Breast epithelium (tissue), 4 donors: ENCODE measurements at regions of chr14 and their contacts with region 1.

Region 1: DNA sequence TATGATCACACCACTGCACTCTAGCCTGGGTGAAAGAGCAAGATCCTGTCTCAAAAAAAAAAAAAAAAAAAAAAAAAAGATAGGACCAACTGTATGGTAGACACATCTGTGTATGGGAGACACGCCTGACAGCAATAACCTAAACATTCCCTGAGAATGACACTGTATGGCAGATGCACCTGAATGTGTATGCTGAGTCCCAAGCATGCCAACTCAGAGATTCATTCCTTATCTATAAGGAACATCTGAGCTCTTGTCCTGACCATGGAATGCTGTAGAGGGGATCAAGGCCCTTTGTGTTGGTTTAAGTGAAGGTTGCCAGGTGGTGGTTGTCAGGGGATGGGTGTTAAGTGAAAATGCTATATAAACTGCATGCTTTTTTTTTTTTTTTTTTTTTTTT is 19.2 kb upstream of the LGALS3 start:
- DNase-seq: no peak
- H3K4me3 ChIP-seq: no peak overlapping the region
- H3K27ac ChIP-seq: no peak overlapping the region
- H3K4me1 ChIP-seq: peaks cover 8 to 16% of the 10 kb centered on the region in 2 donors
- H3K27me3 ChIP-seq: no peaks in the 10 kb centered on the region
- CTCF ChIP-seq: no peak
- POLR2A ChIP-seq: no peak

Region 2: DNA sequence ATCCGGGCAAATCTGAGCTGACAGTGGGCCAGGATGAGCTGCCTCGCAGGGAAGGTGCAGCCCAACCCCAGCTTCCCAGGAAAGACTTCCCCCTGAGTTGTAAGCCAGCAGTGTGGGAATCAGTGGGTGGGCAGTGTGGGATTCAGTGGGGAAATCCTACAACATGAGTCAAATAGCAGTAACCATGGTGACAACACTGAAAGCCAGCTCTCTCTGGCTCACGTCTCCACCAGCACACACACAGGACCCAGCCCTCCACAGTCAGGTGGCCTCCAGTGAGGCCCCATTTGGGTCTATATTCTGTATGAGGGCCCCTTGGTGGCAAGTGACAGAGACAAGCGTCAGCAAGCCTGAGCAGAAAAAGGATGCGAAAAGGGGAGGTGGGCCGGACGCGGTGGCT is 13.3 kb after region 1 on chr14:
- intact Hi-C with region 1: loop called (anchors 1 kb)
- DNase-seq: no peak
- H3K4me3 ChIP-seq: no peak overlapping the region
- H3K27ac ChIP-seq: peak overlapping the region; percentile 71 to 79
- H3K4me1 ChIP-seq: peaks cover 9 to 17% of the 10 kb centered on the region in 2 donors
- H3K27me3 ChIP-seq: no peaks in the 10 kb centered on the region
- CTCF ChIP-seq: no peak
- POLR2A ChIP-seq: no peak

Region 3: GRCh38 chr14:55789430-55789829 is 679.6 kb after region 1 on chr14:
- intact Hi-C with region 1: no loop called
- DNase-seq: no peak
- H3K4me3 ChIP-seq: no peak overlapping the region
- H3K27ac ChIP-seq: no peak overlapping the region
- H3K4me1 ChIP-seq: no peaks in the 10 kb centered on the region
- H3K27me3 ChIP-seq: no peaks in the 10 kb centered on the region
- CTCF ChIP-seq: no peak
- POLR2A ChIP-seq: no peak